Pancreas (tissue), 10 donors: ENCODE measurements at regions of chr7 and their contacts with region 1.

Region 1: GRCh38 chr7:32212321-32212720 is 142.1 kb upstream of the PDE1C start:
- DNase-seq: peak in 1 of 6 donors; percentile 11
- ATAC-seq: no peak
- H3K4me3 ChIP-seq: no peak overlapping the region
- H3K27ac ChIP-seq: no peak overlapping the region
- H3K4me1 ChIP-seq: no peaks in the 10 kb centered on the region
- H3K27me3 ChIP-seq: no peaks in the 10 kb centered on the region
- CTCF ChIP-seq: no peak

Region 2: DNA sequence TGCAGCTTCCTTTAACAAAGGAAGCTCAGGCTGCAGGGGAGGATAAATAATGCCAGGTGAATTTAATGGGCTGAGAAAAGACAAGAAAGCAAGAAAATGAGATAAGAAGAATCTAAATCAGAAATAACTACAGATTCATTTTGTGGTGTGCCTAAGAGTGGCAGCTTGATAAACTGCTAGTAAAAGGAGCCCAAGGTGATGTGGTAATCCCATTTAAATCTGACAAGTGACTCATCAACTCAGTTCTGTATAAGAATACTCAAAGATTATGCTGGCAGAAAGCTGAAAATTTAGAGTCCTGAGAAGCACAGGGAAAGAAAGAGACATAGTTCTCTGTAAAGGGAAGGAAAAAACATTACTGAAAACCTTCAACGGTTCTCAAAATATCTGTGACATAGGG is 32.8 kb before region 1 on chr7:
- intact Hi-C with region 1: no loop called
- DNase-seq: no peak
- ATAC-seq: no peak
- H3K4me3 ChIP-seq: no peak overlapping the region
- H3K27ac ChIP-seq: no peak overlapping the region
- H3K4me1 ChIP-seq: no peaks in the 10 kb centered on the region
- H3K27me3 ChIP-seq: no peaks in the 10 kb centered on the region
- CTCF ChIP-seq: no peak

Region 3: GRCh38 chr7:32364581-32364980 is 152.3 kb after region 1 on chr7:
- intact Hi-C with region 1: loop called in 1 of 3 experiments (anchors 5 kb)
- DNase-seq: no peak
- ATAC-seq: no peak
- H3K4me3 ChIP-seq: no peak overlapping the region
- H3K27ac ChIP-seq: no peak overlapping the region
- H3K4me1 ChIP-seq: no peaks in the 10 kb centered on the region
- H3K27me3 ChIP-seq: peaks cover 0 to 4% (median 0%) of the 10 kb centered on the region in 4 donors
- CTCF ChIP-seq: no peak